Activated CD4-positive, alpha-beta memory T cell treated with anti-CD3 and anti-CD28 coated beads for 36 hours (primary cell): ENCODE measurements at regions of chr14 and their contacts with region 1.

Region 1: GRCh38 chr14:55354500-55354899 is 57.1 kb downstream of the ATG14 start:
- DNase-seq: peak; percentile 73
- H3K4me3 Mint-ChIP-seq: peak overlapping the region; percentile 57
- H3K27ac Mint-ChIP-seq: peak overlapping the region; percentile 86
- H3K4me1 Mint-ChIP-seq: peaks cover 25% of the 10 kb centered on the region
- H3K27me3 Mint-ChIP-seq: no peaks in the 10 kb centered on the region

Region 2: DNA sequence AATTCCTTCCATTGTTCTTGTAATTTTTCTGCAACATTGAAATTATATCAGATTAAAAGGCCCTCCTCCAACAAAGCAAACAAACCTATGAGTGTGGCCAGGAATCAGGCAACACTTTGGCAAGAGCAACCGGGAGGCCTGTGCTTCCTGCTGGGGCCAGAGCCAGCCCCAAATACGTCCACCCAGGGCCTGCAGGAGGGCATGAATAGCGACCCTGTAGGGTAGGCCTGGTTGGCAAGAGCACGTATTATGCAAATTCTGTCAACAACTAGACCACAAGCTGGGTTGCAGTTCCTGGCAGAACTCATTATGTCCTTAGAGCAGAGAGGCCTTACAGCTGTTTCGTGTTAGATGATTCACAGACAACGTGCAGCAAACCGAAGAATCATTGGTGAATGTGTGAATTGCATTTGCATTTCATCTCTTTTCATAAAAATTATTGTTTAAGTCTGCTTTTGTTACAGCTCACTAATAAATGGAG is 252.3 kb before region 1 on chr14:
- CTCF ChIA-PET with region 1: no interaction called
- POLR2A ChIA-PET with region 1: no interaction called
- intact Hi-C with region 1: no loop called
- DNase-seq: peak; percentile 71
- H3K4me3 Mint-ChIP-seq: peak overlapping the region; percentile 17
- H3K27ac Mint-ChIP-seq: peak overlapping the region; percentile 95
- H3K4me1 Mint-ChIP-seq: peaks cover 49% of the 10 kb centered on the region
- H3K27me3 Mint-ChIP-seq: no peaks in the 10 kb centered on the region

Region 3: DNA sequence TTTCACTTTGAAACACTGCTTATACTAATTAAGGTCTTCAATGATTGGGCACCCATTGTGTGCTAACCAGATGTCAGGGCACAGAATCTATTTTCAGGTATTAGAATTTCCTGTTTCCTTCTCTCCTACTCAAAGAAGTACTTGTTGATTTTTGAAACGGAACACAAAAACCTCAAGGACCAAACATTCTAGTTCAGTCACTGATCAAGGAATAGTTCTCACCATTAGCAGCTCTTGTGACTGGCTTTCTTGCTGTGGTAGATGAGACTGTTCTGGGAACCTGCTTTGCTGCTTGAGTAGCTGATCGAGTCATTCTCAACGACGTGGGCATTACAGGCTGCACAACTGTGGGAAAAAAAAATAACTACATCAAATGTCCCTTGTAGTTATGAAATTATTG is 174.1 kb before region 1 on chr14:
- CTCF ChIA-PET with region 1: no interaction called
- POLR2A ChIA-PET with region 1: no interaction called
- intact Hi-C with region 1: no loop called
- DNase-seq: no peak
- H3K4me3 Mint-ChIP-seq: no peak overlapping the region
- H3K27ac Mint-ChIP-seq: no peak overlapping the region
- H3K4me1 Mint-ChIP-seq: peaks cover 9% of the 10 kb centered on the region
- H3K27me3 Mint-ChIP-seq: no peaks in the 10 kb centered on the region

Region 4: GRCh38 chr14:55245657-55246268 is 108.7 kb before region 1 on chr14:
- CTCF ChIA-PET with region 1: interaction called, 66 read pairs
- POLR2A ChIA-PET with region 1: no interaction called
- intact Hi-C with region 1: loop called (anchors 1 kb)
- DNase-seq: no peak
- H3K4me3 Mint-ChIP-seq: no peak overlapping the region
- H3K27ac Mint-ChIP-seq: no peak overlapping the region
- H3K4me1 Mint-ChIP-seq: no peaks in the 10 kb centered on the region
- H3K27me3 Mint-ChIP-seq: no peaks in the 10 kb centered on the region

Region 5: GRCh38 chr14:55270832-55271565 is 83.5 kb before region 1 on chr14 and contains the start of gene FBXO34:
- CTCF ChIA-PET with region 1: interaction called, 180 read pairs
- POLR2A ChIA-PET with region 1: interaction called, 11 read pairs
- intact Hi-C with region 1: loop called (anchors 1 kb)
- DNase-seq: peak; percentile 99
- H3K4me3 Mint-ChIP-seq: peak within 1 kb of the TSS; percentile 87
- H3K27ac Mint-ChIP-seq: peak within 1 kb of the TSS; percentile 90
- H3K4me1 Mint-ChIP-seq: peaks cover 39% of the 10 kb centered on the region
- H3K27me3 Mint-ChIP-seq: peaks cover 2% of the 10 kb centered on the region
- total RNA-seq, gene FBXO34: 19.8 to 22.0 TPM

Region 6: DNA sequence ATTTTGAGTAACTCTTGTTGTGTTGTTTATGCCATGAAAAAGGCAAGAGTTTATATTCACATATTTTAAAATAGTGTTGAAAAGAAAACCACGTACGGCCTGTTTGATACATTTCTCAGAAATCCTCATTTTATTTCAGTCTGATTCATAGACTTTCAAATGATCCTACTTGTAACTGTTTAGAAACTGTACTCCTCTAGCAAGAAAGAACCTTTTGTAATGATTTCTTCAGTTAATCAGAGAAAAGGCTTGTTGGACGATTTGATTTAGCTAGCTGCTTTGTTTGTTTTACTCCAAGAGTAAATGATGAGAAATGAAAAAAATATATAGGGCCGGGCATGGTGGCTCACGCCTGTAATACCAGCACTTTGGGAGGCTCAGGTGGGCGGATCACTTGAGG is 66.1 kb before region 1 on chr14:
- CTCF ChIA-PET with region 1: interaction called, 11 read pairs
- POLR2A ChIA-PET with region 1: no interaction called
- intact Hi-C with region 1: no loop called
- DNase-seq: no peak
- H3K4me3 Mint-ChIP-seq: no peak overlapping the region
- H3K27ac Mint-ChIP-seq: peak overlapping the region; percentile 54
- H3K4me1 Mint-ChIP-seq: peaks cover 32% of the 10 kb centered on the region
- H3K27me3 Mint-ChIP-seq: no peaks in the 10 kb centered on the region

Region 7: GRCh38 chr14:55306938-55307589 is 47.4 kb before region 1 on chr14:
- CTCF ChIA-PET with region 1: interaction called, 13 read pairs
- POLR2A ChIA-PET with region 1: no interaction called
- intact Hi-C with region 1: no loop called
- DNase-seq: no peak
- H3K4me3 Mint-ChIP-seq: no peak overlapping the region
- H3K27ac Mint-ChIP-seq: no peak overlapping the region
- H3K4me1 Mint-ChIP-seq: peaks cover 42% of the 10 kb centered on the region
- H3K27me3 Mint-ChIP-seq: no peaks in the 10 kb centered on the region

Region 8: GRCh38 chr14:55339770-55340169 is 14.7 kb before region 1 on chr14:
- CTCF ChIA-PET with region 1: interaction called, 28 read pairs
- POLR2A ChIA-PET with region 1: interaction called, 6 read pairs
- intact Hi-C with region 1: loop called (anchors 1 kb)
- DNase-seq: peak; percentile 60
- H3K4me3 Mint-ChIP-seq: no peak overlapping the region
- H3K27ac Mint-ChIP-seq: peak overlapping the region; percentile 58
- H3K4me1 Mint-ChIP-seq: peaks cover 77% of the 10 kb centered on the region
- H3K27me3 Mint-ChIP-seq: no peaks in the 10 kb centered on the region

Region 9: DNA sequence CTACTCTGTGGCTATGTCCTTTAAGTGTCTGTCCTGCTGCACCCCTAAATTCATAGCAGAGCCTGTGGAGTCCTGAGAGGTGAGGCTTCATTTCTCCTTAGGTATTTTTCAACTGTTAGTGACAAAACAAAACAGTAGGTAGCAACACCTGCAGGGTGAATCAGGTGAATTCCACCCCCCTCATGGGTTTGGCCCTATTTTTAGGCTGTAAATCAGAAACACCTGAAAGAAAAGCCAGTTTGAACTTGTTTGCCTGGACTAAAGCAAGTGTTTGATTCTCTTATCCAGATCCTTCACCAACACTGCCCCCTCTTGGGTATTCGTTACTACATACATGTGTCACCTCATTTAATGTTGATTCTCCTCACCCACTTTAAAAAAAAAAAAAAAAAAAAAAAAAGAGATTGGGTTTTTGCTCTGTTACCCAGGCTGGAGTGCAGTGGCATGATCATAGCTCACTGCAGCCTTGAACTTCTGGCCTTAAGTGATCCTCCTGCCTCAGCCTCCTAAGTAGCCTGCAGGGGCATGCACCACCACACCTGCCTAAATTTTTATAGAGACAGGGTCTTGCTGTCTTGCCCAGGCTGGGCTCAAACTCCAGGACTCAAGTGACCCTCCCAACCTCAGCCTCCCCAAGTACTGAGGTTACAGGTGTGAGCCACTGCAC is 75.7 kb after region 1 on chr14:
- CTCF ChIA-PET with region 1: interaction called, 9 read pairs
- POLR2A ChIA-PET with region 1: no interaction called
- intact Hi-C with region 1: loop called (anchors 2 kb)
- DNase-seq: peak; percentile 24
- H3K4me3 Mint-ChIP-seq: no peak overlapping the region
- H3K27ac Mint-ChIP-seq: peak overlapping the region; percentile 20
- H3K4me1 Mint-ChIP-seq: peaks cover 28% of the 10 kb centered on the region
- H3K27me3 Mint-ChIP-seq: no peaks in the 10 kb centered on the region